Caco-2 (cell line): ENCODE measurements at regions of chr1 and their contacts with region 1.

Region 1: GRCh38 chr1:195005338-195005737 is 1602.9 kb downstream of the KCNT2 start:
- DNase-seq: no peak
- H3K4me3 ChIP-seq: no peak overlapping the region
- H3K4me3 Mint-ChIP-seq: no peak overlapping the region
- H3K27ac Mint-ChIP-seq: no peak overlapping the region
- H3K4me1 ChIP-seq: no peaks in the 10 kb centered on the region
- H3K4me1 Mint-ChIP-seq: no peaks in the 10 kb centered on the region
- H3K27me3 ChIP-seq: no peaks in the 10 kb centered on the region
- H3K27me3 Mint-ChIP-seq: no peaks in the 10 kb centered on the region
- CTCF ChIP-seq: no peak

Region 2: GRCh38 chr1:194990483-194990882 is 14.9 kb before region 1 on chr1:
- CTCF ChIA-PET with region 1: no interaction called
- POLR2A ChIA-PET with region 1: no interaction called
- intact Hi-C with region 1: loop called (anchors 2 kb)
- DNase-seq: no peak
- H3K4me3 ChIP-seq: no peak overlapping the region
- H3K4me3 Mint-ChIP-seq: no peak overlapping the region
- H3K27ac Mint-ChIP-seq: no peak overlapping the region
- H3K4me1 ChIP-seq: peaks cover 16% of the 10 kb centered on the region
- H3K4me1 Mint-ChIP-seq: no peaks in the 10 kb centered on the region
- H3K27me3 ChIP-seq: no peaks in the 10 kb centered on the region
- H3K27me3 Mint-ChIP-seq: no peaks in the 10 kb centered on the region
- CTCF ChIP-seq: no peak